PC-9 (cell line): ENCODE measurements at regions of chr13 and their contacts with region 1.

Region 1: GRCh38 chr13:34156841-34157365 is 339.0 kb downstream of the RFC3 start:
- DNase-seq: peak; percentile 82 to 97
- H3K4me3 ChIP-seq: peak overlapping the region; percentile 47; the same call in 1 of the 2 replicates
- H3K27ac ChIP-seq: peak overlapping the region; percentile 96
- H3K4me1 ChIP-seq: peaks cover 55% of the 10 kb centered on the region
- H3K27me3 ChIP-seq: no peaks in the 10 kb centered on the region
- CTCF ChIP-seq: no peak

Region 2: DNA sequence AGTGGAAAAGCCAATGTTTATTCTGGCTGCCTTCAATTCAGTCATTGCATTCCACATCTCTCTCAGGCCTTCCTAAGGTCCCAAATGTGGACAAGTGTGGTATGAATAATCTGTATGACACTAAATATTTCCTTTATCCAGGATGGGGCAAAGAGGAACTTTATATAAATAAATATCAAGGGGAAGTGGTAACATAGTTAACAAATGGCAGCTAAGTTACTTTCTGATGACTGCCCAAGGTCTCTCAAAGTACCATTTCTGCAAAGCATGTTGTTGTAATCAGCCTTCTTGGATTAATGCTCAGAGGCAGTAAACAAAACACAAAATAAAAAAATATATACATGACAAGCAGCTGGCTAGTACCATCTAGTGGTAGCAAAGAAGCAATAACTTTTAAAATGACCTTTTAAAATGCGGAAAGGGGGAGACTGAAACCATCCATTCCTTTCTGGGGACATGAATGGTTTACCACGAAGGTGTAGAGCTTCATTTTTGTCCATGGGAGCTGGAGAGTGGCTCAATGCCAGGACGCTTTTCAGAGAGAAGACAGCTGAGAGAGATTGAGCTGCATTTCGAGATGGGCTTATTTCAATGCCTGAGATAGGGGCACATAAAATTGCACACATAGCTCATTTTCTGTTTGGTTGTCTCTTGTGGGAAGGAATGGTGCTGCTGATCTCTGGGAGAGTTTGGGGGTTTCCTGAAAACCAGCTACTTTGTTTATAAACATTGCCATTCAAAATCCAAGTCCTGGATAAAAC is 79.8 kb before region 1 on chr13:
- CTCF ChIA-PET with region 1: interaction called, 3 read pairs
- POLR2A ChIA-PET with region 1: no interaction called
- intact Hi-C with region 1: loop called (anchors 5 kb)
- DNase-seq: peak in 1 of 2 experiments; percentile 38
- H3K4me3 ChIP-seq: no peak overlapping the region
- H3K27ac ChIP-seq: no peak overlapping the region
- H3K4me1 ChIP-seq: peaks cover 9% of the 10 kb centered on the region
- H3K27me3 ChIP-seq: no peaks in the 10 kb centered on the region
- CTCF ChIP-seq: peak; percentile 85

Region 3: DNA sequence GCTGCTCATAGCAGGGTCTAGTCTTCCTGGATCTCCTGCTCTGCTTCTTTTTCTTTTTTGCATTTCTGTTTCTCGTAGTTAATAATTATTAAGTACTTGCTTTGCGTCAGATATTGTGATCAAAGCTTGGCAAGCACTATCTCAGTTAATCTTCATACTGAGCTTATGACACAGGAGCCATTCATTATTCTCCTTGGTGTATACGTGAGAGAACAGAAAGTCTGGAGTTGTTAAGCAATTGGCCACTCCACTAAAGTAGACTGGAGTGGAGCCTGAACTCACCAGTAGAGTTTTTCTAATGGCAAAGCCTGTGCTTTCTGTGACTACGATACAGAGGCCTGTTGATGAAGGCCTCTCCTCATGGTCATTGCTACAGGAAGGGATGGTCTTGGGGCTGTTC is 53.0 kb before region 1 on chr13:
- CTCF ChIA-PET with region 1: no interaction called
- POLR2A ChIA-PET with region 1: no interaction called
- intact Hi-C with region 1: no loop called
- DNase-seq: no peak
- H3K4me3 ChIP-seq: no peak overlapping the region
- H3K27ac ChIP-seq: no peak overlapping the region
- H3K4me1 ChIP-seq: 0 out of 2 replicates have a peak, but pooled peaks cover 7% of the 10 kb centered on the region
- H3K27me3 ChIP-seq: no peaks in the 10 kb centered on the region
- CTCF ChIP-seq: no peak

Region 4: GRCh38 chr13:34246516-34246915 is 89.6 kb after region 1 on chr13:
- CTCF ChIA-PET with region 1: no interaction called
- POLR2A ChIA-PET with region 1: no interaction called
- intact Hi-C with region 1: loop called (anchors 10 kb)
- DNase-seq: peak; percentile 18 to 92
- H3K4me3 ChIP-seq: no peak overlapping the region
- H3K27ac ChIP-seq: peak overlapping the region; percentile 54
- H3K4me1 ChIP-seq: peaks cover 27% of the 10 kb centered on the region
- H3K27me3 ChIP-seq: no peaks in the 10 kb centered on the region
- CTCF ChIP-seq: no peak

Region 5: GRCh38 chr13:34462843-34463242 is 305.9 kb after region 1 on chr13:
- CTCF ChIA-PET with region 1: no interaction called
- POLR2A ChIA-PET with region 1: no interaction called
- intact Hi-C with region 1: loop called (anchors 2 kb)
- DNase-seq: peak; percentile 65 to 90
- H3K4me3 ChIP-seq: 0 out of 2 replicates have a peak overlapping the region, but pooled peaks have one; percentile 7
- H3K27ac ChIP-seq: peak overlapping the region; percentile 78
- H3K4me1 ChIP-seq: peaks cover 29% of the 10 kb centered on the region
- H3K27me3 ChIP-seq: no peaks in the 10 kb centered on the region
- CTCF ChIP-seq: no peak

Region 6: GRCh38 chr13:34941835-34942731 is 785.2 kb after region 1 on chr13 and contains the start of gene NBEA:
- CTCF ChIA-PET with region 1: no interaction called
- POLR2A ChIA-PET with region 1: no interaction called
- intact Hi-C with region 1: loop called (anchors 10 kb)
- DNase-seq: peak; percentile 82 to 83
- H3K4me3 ChIP-seq: peak within 1 kb of the TSS; percentile 71
- H3K27ac ChIP-seq: no peak within 1 kb of the TSS
- H3K4me1 ChIP-seq: peaks cover 39% of the 10 kb centered on the region
- H3K27me3 ChIP-seq: no peaks in the 10 kb centered on the region
- CTCF ChIP-seq: peak; percentile 45; the same call in 1 of the 2 replicates
- total RNA-seq, gene NBEA: 4.0 and 4.5 TPM in 2 replicates